GM10248 (cell line): ENCODE measurements at regions of chr6 and their contacts with region 1.

Region 1: DNA sequence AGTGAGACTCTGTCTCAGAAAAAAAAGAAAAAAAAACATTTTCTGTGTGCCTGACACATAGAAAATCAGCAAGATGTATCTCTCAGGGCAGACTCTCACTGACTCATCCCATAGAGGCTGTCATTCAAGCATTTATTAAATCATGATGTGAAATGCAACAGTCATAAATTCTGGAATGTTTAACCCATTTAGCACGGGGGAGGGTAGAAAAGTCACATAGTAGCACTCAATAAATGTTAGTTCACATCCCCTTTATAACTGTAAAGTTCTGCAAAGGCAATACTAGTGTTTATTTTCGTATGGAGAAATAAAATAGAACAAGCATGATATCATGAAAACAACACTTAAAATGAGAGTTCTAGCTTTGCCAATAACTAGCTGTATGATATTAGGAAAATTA is 15.5 kb upstream of the CARMIL1 start:
- DNase-seq: no peak
- CTCF ChIP-seq: no peak

Region 2: GRCh38 chr6:24991810-24992467 is 271.7 kb before region 1 on chr6:
- CTCF ChIA-PET with region 1: no interaction called
- POLR2A ChIA-PET with region 1: no interaction called
- DNase-seq: peak; percentile 68
- CTCF ChIP-seq: peak; percentile 79

Region 3: GRCh38 chr6:25223490-25223991 is 40.1 kb before region 1 on chr6:
- CTCF ChIA-PET with region 1: interaction called, 17 read pairs
- POLR2A ChIA-PET with region 1: no interaction called
- DNase-seq: peak; percentile 62
- CTCF ChIP-seq: peak; percentile 92

Region 4: DNA sequence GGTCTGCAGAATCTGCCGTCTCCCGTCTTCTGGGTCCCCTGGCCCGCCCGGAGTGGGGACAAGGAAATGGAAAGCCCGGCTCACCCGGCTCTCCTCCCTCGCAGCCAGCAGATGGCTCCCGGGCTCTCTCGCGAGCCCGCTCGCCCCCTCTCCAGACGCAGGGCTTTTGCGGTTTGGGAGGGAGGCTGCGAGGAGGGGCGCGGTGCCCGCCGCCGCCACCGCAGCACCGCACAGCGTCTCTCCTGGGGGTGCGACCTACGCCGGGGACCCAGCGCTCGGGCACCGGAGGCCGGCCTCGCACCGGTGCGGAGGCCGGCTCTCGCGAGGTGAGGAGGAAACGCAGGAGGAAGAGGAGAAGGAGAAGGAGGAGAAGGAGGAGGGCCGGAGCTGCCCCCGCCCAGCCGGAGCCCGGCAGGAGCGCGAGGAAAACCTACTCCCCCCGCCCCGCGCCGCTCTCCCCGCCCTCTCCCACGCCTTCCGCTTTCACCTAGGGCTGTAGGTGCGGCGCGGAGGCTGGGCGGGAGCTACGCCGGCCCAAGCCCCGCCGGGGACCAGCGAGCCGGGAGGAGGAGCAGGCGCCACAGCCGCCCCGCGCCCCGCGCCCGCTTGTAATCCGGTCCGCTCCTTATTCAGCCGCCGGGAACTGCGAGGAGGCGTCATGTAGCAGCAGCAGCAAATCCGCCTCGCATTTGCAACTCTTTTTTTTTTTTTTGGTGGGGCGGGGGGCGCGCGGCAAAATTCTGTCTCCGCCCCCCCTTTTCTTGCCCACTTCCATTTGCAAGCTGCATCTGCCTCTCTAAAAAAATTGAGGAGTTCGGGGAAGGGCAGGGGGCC is 15.5 kb after region 1 on chr6 and contains the start of gene CARMIL1:
- CTCF ChIA-PET with region 1: interaction called, 47 read pairs
- POLR2A ChIA-PET with region 1: no interaction called
- DNase-seq: peak; percentile 90
- CTCF ChIP-seq: peak; percentile 62

Region 5: DNA sequence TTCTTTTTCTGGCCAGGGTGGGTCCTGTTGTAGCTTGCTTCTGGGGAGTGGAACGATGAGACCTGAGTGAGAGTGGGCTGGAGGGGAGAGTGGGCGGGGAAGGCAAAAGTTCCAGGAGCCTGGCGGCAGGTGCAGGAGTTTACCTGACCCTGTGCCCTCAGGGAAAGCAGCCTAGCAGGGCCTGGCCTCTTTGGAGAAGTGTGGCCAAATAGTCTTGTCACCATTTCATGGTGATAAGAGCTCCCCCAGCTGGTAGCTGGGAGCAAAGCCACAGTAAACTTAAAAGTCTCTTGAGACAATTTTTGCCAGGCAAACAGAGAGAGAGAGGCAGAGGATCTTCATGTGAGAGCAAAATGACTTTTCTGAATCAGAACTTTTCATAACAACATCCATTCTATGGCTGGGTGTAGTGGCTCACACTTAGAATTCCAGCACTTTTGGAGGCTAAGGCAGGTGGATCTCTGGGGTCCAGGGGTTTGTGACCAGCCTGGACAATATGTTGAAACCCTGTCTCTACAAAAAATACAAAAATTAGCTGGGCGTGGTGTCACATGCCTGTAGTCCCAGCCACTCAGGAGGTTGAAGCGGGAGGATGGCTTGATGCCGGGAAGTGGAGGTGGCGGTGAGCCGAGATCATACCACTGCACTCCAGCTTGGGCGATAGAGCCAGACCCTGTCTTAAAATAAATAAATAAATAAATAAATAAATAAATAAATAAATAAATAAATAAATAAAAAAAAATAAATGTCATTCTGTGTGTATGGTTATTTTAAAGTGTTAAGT is 226.6 kb after region 1 on chr6:
- CTCF ChIA-PET with region 1: interaction called, 97 read pairs
- POLR2A ChIA-PET with region 1: no interaction called
- DNase-seq: peak; percentile 73
- CTCF ChIP-seq: peak; percentile 84

Region 6: DNA sequence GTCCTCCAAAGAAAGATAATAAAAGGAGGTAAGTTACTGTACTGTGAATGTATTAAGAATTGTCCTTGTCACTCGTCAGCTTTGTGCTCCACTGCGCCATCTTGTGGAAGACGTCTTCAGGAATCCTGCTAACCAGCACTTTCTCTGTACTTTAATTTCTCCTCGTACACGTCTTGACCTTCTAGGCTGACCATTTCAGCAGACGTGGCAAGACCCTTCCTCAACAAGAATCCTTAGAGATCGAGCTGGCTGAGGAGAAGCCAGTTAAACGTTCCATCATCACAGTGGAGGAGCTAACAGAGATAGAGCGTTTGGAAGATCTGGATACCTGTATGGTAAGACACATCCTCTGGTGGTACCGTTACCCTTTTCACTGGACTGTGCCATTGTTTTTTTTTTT is 292.9 kb after region 1 on chr6:
- CTCF ChIA-PET with region 1: interaction called, 60 read pairs
- POLR2A ChIA-PET with region 1: no interaction called
- DNase-seq: peak; percentile 56
- CTCF ChIP-seq: peak; percentile 88

Region 7: GRCh38 chr6:25601800-25602673 is 338.4 kb after region 1 on chr6:
- CTCF ChIA-PET with region 1: interaction called, 20 read pairs
- POLR2A ChIA-PET with region 1: no interaction called
- DNase-seq: peak; percentile 40
- CTCF ChIP-seq: peak; percentile 50